Activated CD4-positive, alpha-beta memory T cell treated with anti-CD3 and anti-CD28 coated beads for 36 hours (primary cell): ENCODE measurements at regions of chr12 and their contacts with region 1.

Region 1: GRCh38 chr12:104494137-104494792 is 37.5 kb downstream of the CHST11 start:
- DNase-seq: peak; percentile 89
- H3K4me3 Mint-ChIP-seq: peak overlapping the region; percentile 62
- H3K27ac Mint-ChIP-seq: peak overlapping the region; percentile 89
- H3K4me1 Mint-ChIP-seq: peaks cover 88% of the 10 kb centered on the region
- H3K27me3 Mint-ChIP-seq: no peaks in the 10 kb centered on the region

Region 2: DNA sequence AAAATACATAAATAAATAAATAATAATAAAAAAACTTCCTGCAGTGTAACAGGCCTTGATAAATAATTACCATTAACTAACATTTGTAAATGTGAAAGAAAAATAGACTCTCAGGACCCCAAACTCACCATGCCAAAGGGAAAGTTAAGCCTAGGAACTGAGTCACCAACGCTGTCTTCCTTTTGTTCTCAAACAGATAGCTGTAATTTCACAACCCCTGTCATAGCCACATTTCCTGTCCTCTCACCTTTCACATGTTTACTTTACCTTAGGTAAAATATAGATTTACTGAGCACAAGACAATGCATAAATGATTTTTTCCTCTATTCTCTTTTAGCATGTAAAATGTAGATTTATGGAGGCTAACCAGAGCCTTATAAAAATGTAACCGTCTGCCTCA is 73.4 kb before region 1 on chr12:
- CTCF ChIA-PET with region 1: no interaction called
- POLR2A ChIA-PET with region 1: no interaction called
- intact Hi-C with region 1: no loop called
- DNase-seq: no peak
- H3K4me3 Mint-ChIP-seq: no peak overlapping the region
- H3K27ac Mint-ChIP-seq: no peak overlapping the region
- H3K4me1 Mint-ChIP-seq: peaks cover 8% of the 10 kb centered on the region
- H3K27me3 Mint-ChIP-seq: no peaks in the 10 kb centered on the region

Region 3: DNA sequence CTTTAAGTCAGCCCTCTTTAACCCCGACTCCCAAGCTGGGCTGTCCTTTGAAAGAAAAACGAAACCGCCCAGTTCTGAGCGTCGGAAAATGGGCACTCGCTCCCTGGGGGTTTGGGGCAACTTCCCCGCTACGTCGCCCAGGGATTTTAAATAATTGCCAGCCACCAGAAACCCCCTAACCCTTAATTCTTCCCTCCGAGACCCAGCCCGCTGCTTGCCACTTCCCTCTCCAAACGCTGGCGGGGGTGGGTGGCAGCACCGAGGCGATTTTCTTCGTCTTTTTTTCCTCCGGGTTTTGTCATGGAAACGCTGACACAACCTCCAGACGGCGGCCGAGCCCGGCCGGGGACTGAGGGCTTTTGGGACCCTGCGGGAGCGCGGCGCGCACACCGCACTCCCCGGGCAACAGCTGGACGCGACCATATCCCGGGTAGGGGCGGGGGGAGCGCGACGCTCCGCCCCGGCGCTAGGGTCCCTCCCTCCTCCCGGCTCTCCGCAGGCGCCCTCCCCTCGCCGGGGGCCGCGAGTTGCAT is 37.8 kb before region 1 on chr12 and contains the start of gene CHST11:
- CTCF ChIA-PET with region 1: interaction called, 9 read pairs
- POLR2A ChIA-PET with region 1: interaction called, 43 read pairs
- intact Hi-C with region 1: loop called (anchors 1 kb)
- DNase-seq: peak; percentile 89
- H3K4me3 Mint-ChIP-seq: peak within 1 kb of the TSS; percentile 99
- H3K27ac Mint-ChIP-seq: peak within 1 kb of the TSS; percentile 97
- H3K4me1 Mint-ChIP-seq: peaks cover 29% of the 10 kb centered on the region
- H3K27me3 Mint-ChIP-seq: no peaks in the 10 kb centered on the region
- total RNA-seq, gene CHST11: 58.3 to 59.0 TPM

Region 4: GRCh38 chr12:104462931-104463339 is 31.3 kb before region 1 on chr12:
- CTCF ChIA-PET with region 1: interaction called, 7 read pairs
- POLR2A ChIA-PET with region 1: interaction called, 43 read pairs
- intact Hi-C with region 1: loop called (anchors 1 kb)
- DNase-seq: peak; percentile 65
- H3K4me3 Mint-ChIP-seq: peak overlapping the region; percentile 67
- H3K27ac Mint-ChIP-seq: peak overlapping the region; percentile 98
- H3K4me1 Mint-ChIP-seq: peaks cover 76% of the 10 kb centered on the region
- H3K27me3 Mint-ChIP-seq: no peaks in the 10 kb centered on the region

Region 5: GRCh38 chr12:104478396-104479122 is 15.7 kb before region 1 on chr12:
- CTCF ChIA-PET with region 1: interaction called, 5 read pairs
- POLR2A ChIA-PET with region 1: interaction called, 6 read pairs
- intact Hi-C with region 1: loop called (anchors 1 kb)
- DNase-seq: peak; percentile 50
- H3K4me3 Mint-ChIP-seq: peak overlapping the region; percentile 84
- H3K27ac Mint-ChIP-seq: peak overlapping the region; percentile 98
- H3K4me1 Mint-ChIP-seq: peaks cover 86% of the 10 kb centered on the region
- H3K27me3 Mint-ChIP-seq: no peaks in the 10 kb centered on the region

Region 6: GRCh38 chr12:104569346-104570173 is 75.3 kb after region 1 on chr12:
- CTCF ChIA-PET with region 1: interaction called, 3 read pairs
- POLR2A ChIA-PET with region 1: interaction called, 3 read pairs
- intact Hi-C with region 1: loop called (anchors 5 kb)
- DNase-seq: peak; percentile 70
- H3K4me3 Mint-ChIP-seq: peak overlapping the region; percentile 1
- H3K27ac Mint-ChIP-seq: peak overlapping the region; percentile 46
- H3K4me1 Mint-ChIP-seq: peaks cover 62% of the 10 kb centered on the region
- H3K27me3 Mint-ChIP-seq: no peaks in the 10 kb centered on the region

Region 7: DNA sequence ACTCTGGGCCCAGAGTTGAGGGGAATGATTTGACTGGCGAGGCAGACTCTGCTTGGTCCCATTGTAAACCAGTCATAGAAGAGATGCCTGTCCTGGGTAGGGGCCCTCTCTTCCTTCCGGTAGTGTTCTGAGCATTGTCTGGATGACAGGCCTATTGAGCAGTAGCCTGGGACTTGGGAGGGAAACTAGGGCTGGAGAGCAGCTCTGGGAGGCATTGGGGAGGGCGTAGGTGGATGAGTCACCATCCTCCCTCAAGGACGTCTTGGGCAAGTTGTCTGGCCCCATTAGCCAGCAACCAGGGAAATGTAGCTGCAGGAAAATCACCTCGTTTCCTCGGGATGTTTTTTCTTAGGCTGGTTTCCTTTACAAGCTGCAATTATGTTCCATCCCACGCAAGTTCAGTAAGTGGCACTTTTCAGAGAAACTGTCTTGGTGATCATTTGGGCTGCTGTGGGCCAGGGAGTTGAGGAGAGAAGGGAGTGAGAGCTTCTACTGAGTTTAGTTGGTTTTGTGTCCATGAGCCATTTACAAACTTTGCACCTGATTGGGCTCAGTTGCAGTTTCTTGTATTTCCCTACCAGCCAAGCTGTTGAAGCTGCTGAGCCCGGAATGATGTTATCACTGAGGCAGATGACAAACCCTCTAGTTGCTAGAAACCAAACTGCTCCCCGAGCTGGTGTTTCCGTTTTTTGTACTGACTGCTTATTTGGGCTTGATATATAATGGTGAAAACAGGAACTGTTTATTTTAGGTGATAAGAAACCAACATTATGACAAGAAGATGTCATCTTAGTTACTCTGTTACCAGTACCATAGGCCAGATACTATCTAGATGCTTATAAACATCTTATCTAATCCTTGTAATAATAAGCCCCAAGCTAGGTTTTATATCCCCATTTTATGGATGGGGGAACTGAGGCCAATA is 110.1 kb after region 1 on chr12:
- CTCF ChIA-PET with region 1: no interaction called
- POLR2A ChIA-PET with region 1: interaction called, 7 read pairs
- intact Hi-C with region 1: loop called (anchors 1 kb)
- DNase-seq: peak; percentile 81
- H3K4me3 Mint-ChIP-seq: peak overlapping the region; percentile 19
- H3K27ac Mint-ChIP-seq: peak overlapping the region; percentile 92
- H3K4me1 Mint-ChIP-seq: peaks cover 47% of the 10 kb centered on the region
- H3K27me3 Mint-ChIP-seq: no peaks in the 10 kb centered on the region

Region 8: GRCh38 chr12:104930388-104931326 is 436.4 kb after region 1 on chr12:
- CTCF ChIA-PET with region 1: no interaction called
- POLR2A ChIA-PET with region 1: no interaction called
- intact Hi-C with region 1: loop called (anchors 2 kb)
- DNase-seq: peak; percentile 73
- H3K4me3 Mint-ChIP-seq: no peak overlapping the region
- H3K27ac Mint-ChIP-seq: peak overlapping the region; percentile 39
- H3K4me1 Mint-ChIP-seq: peaks cover 25% of the 10 kb centered on the region
- H3K27me3 Mint-ChIP-seq: no peaks in the 10 kb centered on the region